ENCODE measurements at regions of chr2 and their contacts with region 1.

Region 1: DNA sequence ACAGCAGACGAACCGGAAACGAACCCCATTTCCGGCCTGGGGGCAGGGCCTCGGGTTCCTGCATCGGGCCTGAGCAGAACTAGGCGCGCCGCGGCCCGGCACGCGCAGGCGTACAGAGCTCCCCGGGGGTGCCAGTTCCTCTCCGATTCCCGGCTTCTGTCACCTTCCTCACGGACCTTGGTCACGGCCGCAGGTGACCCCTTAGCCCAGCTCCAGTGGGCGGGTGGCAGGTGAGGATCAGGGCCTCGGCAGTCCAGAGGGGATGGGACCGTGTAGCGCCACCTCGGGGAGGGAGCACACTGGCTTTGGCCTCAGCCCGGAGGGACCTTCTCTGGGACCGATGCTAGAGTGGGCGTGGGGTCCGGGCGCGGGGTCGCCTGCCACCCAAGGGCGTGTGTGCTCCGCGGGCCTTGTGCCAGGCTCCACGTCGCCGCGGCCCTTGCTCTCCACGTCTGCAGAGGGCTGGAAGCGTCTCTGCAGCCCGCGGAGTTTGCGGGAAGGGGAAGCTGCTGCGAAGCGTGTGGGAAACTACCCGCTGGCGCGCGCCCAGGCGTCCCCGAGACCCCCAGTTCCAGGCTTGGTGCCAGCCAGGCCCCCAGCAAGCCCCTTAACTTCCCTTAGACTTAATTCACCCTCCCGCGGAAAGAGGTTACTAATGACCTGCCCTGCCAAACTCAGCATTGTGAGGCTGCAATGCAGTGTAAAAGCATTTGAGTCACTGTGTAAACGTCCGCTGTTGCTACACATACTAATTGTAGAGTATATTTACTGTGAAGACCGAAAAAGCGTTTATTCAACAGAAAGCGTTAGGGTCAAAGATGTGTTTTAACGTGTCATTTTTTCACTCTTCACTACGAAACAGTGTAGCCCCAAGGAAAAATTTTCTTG is at the start of gene TRAPPC12:
- DNase-seq: peak; percentile 91
- H3K4me3 Mint-ChIP-seq: peak within 1 kb of the TSS; percentile 97
- H3K27ac Mint-ChIP-seq: peak within 1 kb of the TSS; percentile 97
- H3K4me1 Mint-ChIP-seq: peaks cover 33% of the 10 kb centered on the region
- H3K27me3 Mint-ChIP-seq: no peaks in the 10 kb centered on the region
- total RNA-seq, gene TRAPPC12: 84.6 and 87.1 TPM in 2 replicates

Region 2: GRCh38 chr2:2613279-2614199 is 766.4 kb before region 1 on chr2:
- intact Hi-C with region 1: loop called (anchors 2 kb)
- DNase-seq: peak; percentile 87
- H3K4me3 Mint-ChIP-seq: peak overlapping the region; percentile 75
- H3K27ac Mint-ChIP-seq: peak overlapping the region; percentile 73
- H3K4me1 Mint-ChIP-seq: peaks cover 7% of the 10 kb centered on the region
- H3K27me3 Mint-ChIP-seq: peaks cover 14% of the 10 kb centered on the region

Region 3: DNA sequence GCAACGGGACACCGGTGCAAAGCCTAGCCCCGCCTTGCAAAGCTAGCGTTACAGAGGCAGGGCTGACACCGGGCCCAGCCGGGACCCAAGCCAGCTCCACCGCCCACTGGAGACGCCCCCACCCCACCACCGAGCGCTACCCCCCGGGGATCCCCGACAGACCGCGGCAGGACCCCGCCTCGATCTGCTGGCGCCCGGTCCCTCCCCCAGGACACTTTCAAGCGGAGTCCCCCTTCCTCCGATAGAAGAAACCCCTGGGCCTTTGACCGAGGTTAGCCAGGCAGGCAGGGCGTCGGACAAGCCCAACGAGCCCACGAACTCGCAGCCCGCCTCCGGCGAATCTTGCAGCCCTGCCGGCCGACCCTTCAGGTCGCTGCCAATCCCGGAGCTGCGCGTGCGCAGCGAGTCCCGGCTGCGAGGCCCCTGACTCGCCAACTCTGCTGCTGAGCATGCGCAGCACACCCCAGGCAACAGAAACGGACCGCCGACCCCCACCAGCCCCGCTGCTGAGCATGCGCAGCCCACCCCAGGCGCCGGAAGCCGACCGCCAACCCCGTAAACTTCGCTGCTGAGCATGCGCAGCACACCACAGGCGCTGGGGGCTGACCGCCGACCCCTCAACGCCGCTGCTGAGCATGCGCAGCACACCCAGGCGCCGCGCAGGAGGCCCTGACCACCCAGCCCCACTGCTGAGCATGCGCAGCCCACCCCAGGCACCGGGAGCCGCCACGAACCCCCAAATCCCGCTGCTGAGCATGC is 138.8 kb after region 1 on chr2:
- intact Hi-C with region 1: loop called (anchors 1 kb)
- DNase-seq: peak; percentile 98
- H3K4me3 Mint-ChIP-seq: peak overlapping the region; percentile 91
- H3K27ac Mint-ChIP-seq: peak overlapping the region; percentile 78
- H3K4me1 Mint-ChIP-seq: peaks cover 31% of the 10 kb centered on the region
- H3K27me3 Mint-ChIP-seq: no peaks in the 10 kb centered on the region

Region 4: DNA sequence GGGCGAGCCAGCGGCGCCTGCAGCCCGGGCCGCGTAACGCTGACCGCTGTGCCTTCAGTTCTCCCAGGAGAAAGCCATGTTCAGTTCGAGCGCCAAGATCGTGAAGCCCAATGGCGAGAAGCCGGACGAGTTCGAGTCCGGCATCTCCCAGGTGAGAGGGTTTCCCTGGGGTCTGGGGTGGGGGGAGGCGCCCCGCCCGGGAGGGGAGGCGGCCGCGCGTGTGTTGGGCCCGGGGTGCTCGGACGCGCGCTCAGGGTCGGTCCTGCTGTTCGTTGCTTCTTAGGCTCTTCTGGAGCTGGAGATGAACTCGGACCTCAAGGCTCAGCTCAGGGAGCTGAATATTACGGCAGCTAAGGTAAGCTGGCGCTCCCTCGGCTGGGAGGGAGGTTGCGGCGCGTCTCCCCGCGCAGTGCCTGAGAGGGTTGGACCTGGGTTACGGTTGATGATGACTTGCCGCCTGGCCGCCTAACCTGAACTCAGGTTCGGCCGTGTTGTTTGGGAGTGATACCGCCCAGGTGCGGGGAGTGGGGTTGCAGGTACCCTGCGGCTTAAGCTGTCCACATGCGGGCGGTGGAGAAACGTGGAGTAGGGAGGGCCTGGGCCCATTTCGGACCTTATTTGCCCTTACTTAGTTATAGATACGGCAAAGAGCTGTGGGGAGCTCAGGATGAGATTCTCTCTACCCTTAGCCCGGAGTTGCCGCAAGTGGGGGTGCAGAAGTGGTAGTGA is 195.8 kb after region 1 on chr2:
- intact Hi-C with region 1: loop called (anchors 1 kb)
- DNase-seq: peak; percentile 27
- H3K4me3 Mint-ChIP-seq: peak overlapping the region; percentile 93
- H3K27ac Mint-ChIP-seq: peak overlapping the region; percentile 90
- H3K4me1 Mint-ChIP-seq: peaks cover 34% of the 10 kb centered on the region
- H3K27me3 Mint-ChIP-seq: no peaks in the 10 kb centered on the region

Measured in activated T-helper 2 cell treated with anti-CD3 and anti-CD28 coated beads, Interferon-gamma antibody, Interleukin-2, Interleukin-4, amounts not matched to agents 10 μg/mL and 5 μg/mL and 100 μg/mL, durations not matched to agents 14 hours and 24 hours and 36 hours (primary cell).